ENCODE measurements at regions of chr3 and their contacts with region 1.

Region 1: GRCh38 chr3:170357176-170357919 is at the start of gene SKIL:
- DNase-seq: peak; percentile 96
- ATAC-seq: peak; percentile 77
- H3K4me3 ChIP-seq: peak within 1 kb of the TSS; percentile 73
- H3K27ac ChIP-seq: peak within 1 kb of the TSS; percentile 96
- H3K4me1 ChIP-seq: peaks cover 17% of the 10 kb centered on the region
- H3K27me3 ChIP-seq: no peaks in the 10 kb centered on the region
- CTCF ChIP-seq: 0 out of 2 replicates have a peak, but pooled peaks have one; percentile 11
- POLR2A ChIP-seq: peak; percentile 95
- RAD21 ChIP-seq: no peak
- total RNA-seq, gene SKIL: 51.7 and 55.9 TPM in 2 replicates

Region 2: GRCh38 chr3:170144437-170144843 is 212.9 kb before region 1 on chr3:
- CTCF ChIA-PET with region 1: no interaction called
- POLR2A ChIA-PET with region 1: interaction called, 13 read pairs
- dilution Hi-C with region 1: no loop called
- in situ Hi-C with region 1: no loop called
- intact Hi-C with region 1: no loop called
- DNase-seq: no peak
- ATAC-seq: no peak
- H3K4me3 ChIP-seq: no peak overlapping the region
- H3K27ac ChIP-seq: no peak overlapping the region
- H3K4me1 ChIP-seq: no peaks in the 10 kb centered on the region
- H3K27me3 ChIP-seq: no peaks in the 10 kb centered on the region
- CTCF ChIP-seq: no peak
- POLR2A ChIP-seq: no peak
- RAD21 ChIP-seq: no peak

Region 3: DNA sequence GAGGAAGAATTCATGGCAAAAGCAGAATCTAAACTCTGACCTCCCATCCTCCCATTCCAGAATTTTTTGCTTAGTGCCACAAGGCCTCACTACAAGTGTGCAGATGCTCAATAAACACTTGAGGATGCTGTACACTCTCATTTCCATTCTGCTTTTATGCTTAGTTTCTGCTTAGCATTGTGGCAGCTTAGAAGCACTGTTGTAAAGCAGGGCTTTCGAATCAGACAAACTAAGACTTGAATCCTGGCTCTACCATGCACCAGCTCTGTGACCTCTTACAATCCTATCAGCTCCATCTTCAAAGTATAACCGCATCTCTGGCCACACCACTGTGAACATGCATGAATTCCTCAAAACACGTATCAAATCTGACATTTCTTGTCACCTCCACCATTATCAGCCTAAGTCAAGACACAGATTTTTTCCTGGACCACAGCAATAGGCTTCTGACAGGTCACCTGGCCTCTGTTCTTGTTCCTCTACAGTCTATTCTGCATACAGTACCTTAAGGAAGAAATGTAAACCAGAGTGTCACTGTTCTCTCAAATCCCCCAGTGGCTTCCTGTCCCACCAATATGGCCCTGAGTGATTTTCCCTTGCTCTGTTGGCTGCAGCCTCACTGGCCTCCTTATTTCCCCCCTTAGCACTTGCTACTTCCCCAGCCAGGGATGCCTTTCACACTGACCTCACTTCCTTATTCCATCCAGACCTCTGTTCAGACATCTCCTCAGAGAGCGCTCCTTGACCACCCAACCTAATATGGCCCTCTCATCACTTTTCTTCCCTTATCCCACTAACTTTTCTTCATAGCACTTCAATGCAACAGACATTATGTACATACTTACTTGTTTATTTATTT is 167.7 kb before region 1 on chr3:
- CTCF ChIA-PET with region 1: interaction called, 4 read pairs
- POLR2A ChIA-PET with region 1: no interaction called
- dilution Hi-C with region 1: no loop called
- in situ Hi-C with region 1: no loop called
- intact Hi-C with region 1: loop called (anchors 5 kb)
- DNase-seq: no peak
- ATAC-seq: peak; percentile 73
- H3K4me3 ChIP-seq: no peak overlapping the region
- H3K27ac ChIP-seq: no peak overlapping the region
- H3K4me1 ChIP-seq: peaks cover 5% of the 10 kb centered on the region; the same call in 1 of the 2 replicates
- H3K27me3 ChIP-seq: no peaks in the 10 kb centered on the region
- CTCF ChIP-seq: no peak
- POLR2A ChIP-seq: no peak
- RAD21 ChIP-seq: no peak